Activated naive CD4-positive, alpha-beta T cell treated with anti-CD3 and anti-CD28 coated beads for 36 hours (primary cell): ENCODE measurements at regions of chr5 and their contacts with region 1.

Region 1: GRCh38 chr5:168679515-168679920 is 100.3 kb upstream of the PANK3 start:
- DNase-seq: peak; percentile 78
- H3K4me3 Mint-ChIP-seq: no peak overlapping the region
- H3K27ac Mint-ChIP-seq: no peak overlapping the region
- H3K4me1 Mint-ChIP-seq: peaks cover 12% of the 10 kb centered on the region
- H3K27me3 Mint-ChIP-seq: no peaks in the 10 kb centered on the region

Region 2: DNA sequence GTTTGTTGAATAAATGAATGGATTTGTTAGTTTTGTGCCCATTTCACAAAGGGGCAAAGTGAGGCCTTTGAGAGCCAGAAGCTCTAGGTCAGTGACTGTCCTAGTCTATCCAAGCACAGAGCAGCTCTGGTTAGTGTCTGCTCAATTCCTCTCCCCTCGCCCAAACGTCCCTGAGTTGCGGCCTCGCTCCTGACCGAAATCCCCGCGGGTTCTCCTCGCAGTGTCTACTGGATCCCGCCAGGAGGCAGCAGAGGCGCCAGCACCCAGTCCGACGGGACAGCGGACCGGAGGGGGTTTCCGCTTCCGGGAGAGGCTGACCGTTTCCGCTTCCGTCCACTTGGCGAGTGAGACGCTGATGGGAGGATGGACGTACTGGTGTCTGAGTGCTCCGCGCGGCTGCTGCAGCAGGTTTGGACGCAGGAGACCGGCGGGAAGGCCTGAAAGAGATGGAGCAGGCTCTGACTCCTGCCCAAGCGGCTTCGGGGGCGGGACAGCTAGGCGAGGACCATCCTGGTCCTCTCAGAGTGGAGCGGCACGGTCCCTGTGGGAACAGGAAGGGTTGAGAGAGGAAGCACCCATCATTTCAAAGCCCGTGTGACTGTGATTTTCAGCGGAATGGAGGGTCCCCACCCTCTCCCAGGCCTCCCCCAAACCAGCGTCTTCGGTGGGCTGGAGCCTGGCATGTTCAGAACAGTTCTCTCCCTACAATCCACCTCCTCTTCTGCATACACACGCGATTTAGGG is 193.2 kb before region 1 on chr5 and contains the start of gene RARS1:
- CTCF ChIA-PET with region 1: no interaction called
- intact Hi-C with region 1: loop called (anchors 5 kb)
- DNase-seq: peak; percentile 94
- H3K4me3 Mint-ChIP-seq: peak within 1 kb of the TSS; percentile 98
- H3K27ac Mint-ChIP-seq: peak within 1 kb of the TSS; percentile 91
- H3K4me1 Mint-ChIP-seq: peaks cover 34% of the 10 kb centered on the region
- H3K27me3 Mint-ChIP-seq: no peaks in the 10 kb centered on the region
- total RNA-seq, gene RARS1: 80.9 to 84.0 TPM

Region 3: DNA sequence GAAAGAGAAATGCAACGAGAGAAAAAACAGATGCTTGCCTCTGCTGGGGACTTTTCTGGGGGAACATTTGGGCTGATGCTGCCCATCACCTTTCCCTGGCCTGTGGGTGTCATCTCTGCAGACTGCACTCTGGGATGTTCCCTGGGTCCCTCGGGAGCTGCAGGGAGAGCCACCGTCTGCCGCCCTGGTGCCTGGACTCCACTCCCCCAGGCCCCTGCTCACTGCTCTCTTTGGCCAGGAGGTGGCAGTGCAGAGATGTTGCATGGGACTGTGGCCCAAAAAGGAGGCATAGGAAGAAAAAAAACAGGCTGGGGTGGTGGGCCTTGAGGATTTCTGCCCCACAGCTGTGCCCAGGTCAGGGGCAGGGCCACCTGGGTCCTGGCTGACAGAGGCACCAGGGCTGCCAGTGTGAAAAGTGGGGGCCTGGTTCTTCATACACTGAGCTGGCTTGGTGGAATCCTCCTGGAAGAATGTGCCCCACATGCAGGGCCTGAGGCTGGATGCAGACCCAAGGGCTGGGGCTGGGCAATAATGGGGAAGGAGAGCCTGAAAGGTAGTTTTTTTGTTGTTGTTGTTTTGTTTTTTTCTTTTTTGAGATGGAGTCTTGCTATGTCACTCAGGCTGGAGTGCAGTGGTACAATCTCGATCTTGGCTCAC is 267.8 kb after region 1 on chr5:
- CTCF ChIA-PET with region 1: no interaction called
- intact Hi-C with region 1: loop called (anchors 2 kb)
- DNase-seq: peak; percentile 62
- H3K4me3 Mint-ChIP-seq: no peak overlapping the region
- H3K27ac Mint-ChIP-seq: no peak overlapping the region
- H3K4me1 Mint-ChIP-seq: no peaks in the 10 kb centered on the region
- H3K27me3 Mint-ChIP-seq: no peaks in the 10 kb centered on the region

Region 4: GRCh38 chr5:168987543-168988300 is 308.2 kb after region 1 on chr5:
- CTCF ChIA-PET with region 1: interaction called, 4 read pairs
- intact Hi-C with region 1: loop called (anchors 1 kb)
- DNase-seq: peak; percentile 77
- H3K4me3 Mint-ChIP-seq: no peak overlapping the region
- H3K27ac Mint-ChIP-seq: no peak overlapping the region
- H3K4me1 Mint-ChIP-seq: no peaks in the 10 kb centered on the region
- H3K27me3 Mint-ChIP-seq: peaks cover 6% of the 10 kb centered on the region

Region 5: GRCh38 chr5:169302491-169303118 is 623.1 kb after region 1 on chr5:
- CTCF ChIA-PET with region 1: interaction called, 5 read pairs
- intact Hi-C with region 1: loop called (anchors 1 kb)
- DNase-seq: peak; percentile 79
- H3K4me3 Mint-ChIP-seq: no peak overlapping the region
- H3K27ac Mint-ChIP-seq: no peak overlapping the region
- H3K4me1 Mint-ChIP-seq: peaks cover 14% of the 10 kb centered on the region
- H3K27me3 Mint-ChIP-seq: peaks cover 51% of the 10 kb centered on the region